Activated CD4-positive, alpha-beta memory T cell treated with anti-CD3 and anti-CD28 coated beads, Interleukin-2, amount 10 ng/mL, durations not matched to agents 7 days and 5 days (primary cell): ENCODE measurements at regions of chr3 and their contacts with region 1.

Region 1: DNA sequence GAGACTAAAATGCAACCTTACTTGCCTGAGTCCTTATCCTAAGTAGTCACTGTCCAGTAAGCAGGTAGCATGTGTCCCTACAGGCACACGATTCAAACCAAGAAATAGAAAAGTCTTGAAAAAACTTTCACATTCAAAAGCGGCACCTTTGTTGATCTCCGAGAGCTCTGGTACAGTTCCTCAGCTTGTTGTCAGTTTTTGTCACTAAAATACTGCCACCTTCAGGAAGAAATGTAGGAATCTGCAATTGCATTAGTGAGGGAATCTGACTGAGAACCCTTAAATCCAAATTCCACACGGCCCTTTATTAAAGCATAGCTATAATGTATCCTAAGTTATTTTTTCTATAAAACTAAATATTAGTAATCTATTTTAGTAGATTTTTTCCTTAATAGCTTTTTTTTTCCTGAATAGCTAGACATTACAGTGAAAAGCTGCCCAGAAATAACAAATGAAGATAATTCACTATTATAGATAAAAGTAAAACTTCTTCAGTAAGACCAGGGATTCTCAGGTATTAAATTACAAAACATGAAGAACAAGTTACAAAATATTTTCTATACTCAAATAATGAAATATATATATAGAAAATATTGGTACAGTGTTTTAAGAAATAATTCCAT is 44.0 kb downstream of the CCDC54 start:
- DNase-seq: no peak
- H3K4me3 Mint-ChIP-seq: no peak overlapping the region
- H3K27ac Mint-ChIP-seq: no peak overlapping the region
- H3K4me1 Mint-ChIP-seq: peaks cover 3% of the 10 kb centered on the region
- H3K27me3 Mint-ChIP-seq: peaks cover 21% of the 10 kb centered on the region

Region 2: DNA sequence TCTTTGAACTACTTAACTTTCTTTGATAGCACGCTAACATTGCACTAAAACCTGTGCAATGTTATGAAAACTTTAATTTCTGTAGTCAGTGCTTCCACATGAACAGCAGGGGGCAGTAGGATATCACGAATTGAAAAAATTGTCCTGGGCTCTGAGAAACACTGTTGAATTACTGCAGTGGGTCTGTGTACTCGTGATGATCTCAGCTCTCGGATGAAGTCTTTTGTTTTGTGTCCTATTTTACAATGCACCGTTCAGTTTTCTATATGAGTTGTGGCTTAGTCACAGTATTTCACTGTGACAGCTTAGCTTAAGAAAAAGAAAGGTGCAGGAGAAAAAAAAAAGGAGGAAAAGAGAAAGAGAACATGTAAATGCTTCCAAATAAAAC is 185.4 kb before region 1 on chr3:
- CTCF ChIA-PET with region 1: interaction called, 41 read pairs
- POLR2A ChIA-PET with region 1: interaction called, 3 read pairs
- DNase-seq: peak; percentile 47
- H3K4me3 Mint-ChIP-seq: peak overlapping the region; percentile 40
- H3K27ac Mint-ChIP-seq: no peak overlapping the region
- H3K4me1 Mint-ChIP-seq: peaks cover 16% of the 10 kb centered on the region
- H3K27me3 Mint-ChIP-seq: peaks cover 10% of the 10 kb centered on the region

Region 3: DNA sequence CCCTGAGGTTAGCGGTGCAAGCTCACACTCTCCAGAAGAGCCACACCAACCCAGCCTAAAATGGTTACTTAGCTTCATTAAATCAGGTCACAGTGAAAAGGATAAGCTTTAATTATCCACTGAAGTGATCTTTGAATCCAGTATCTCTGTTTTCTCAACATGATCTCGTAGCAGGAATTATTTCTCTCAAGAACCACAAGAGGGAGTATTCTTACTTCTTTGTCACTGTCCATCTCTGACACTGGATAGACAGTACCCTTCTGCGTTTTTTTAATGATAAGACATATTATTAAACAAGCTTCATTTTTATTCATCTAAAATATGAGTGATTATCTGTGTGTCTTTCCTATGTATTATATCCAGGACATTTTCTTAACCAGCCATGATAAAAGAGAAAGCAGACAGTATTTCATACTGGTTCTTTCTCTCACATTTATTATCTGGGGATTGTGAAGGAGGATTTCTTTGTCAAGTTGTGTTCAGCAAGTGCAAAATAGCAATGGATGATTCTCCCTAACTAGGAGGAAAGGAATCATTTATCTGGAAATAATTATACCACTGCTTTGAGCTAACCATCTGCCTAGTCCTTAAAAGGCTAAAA is 149.4 kb before region 1 on chr3:
- CTCF ChIA-PET with region 1: interaction called, 34 read pairs
- POLR2A ChIA-PET with region 1: no interaction called
- DNase-seq: no peak
- H3K4me3 Mint-ChIP-seq: no peak overlapping the region
- H3K27ac Mint-ChIP-seq: no peak overlapping the region
- H3K4me1 Mint-ChIP-seq: no peaks in the 10 kb centered on the region
- H3K27me3 Mint-ChIP-seq: peaks cover 17% of the 10 kb centered on the region

Region 4: GRCh38 chr3:107392549-107393165 is 28.6 kb before region 1 on chr3:
- CTCF ChIA-PET with region 1: no interaction called
- POLR2A ChIA-PET with region 1: no interaction called
- DNase-seq: no peak
- H3K4me3 Mint-ChIP-seq: no peak overlapping the region
- H3K27ac Mint-ChIP-seq: no peak overlapping the region
- H3K4me1 Mint-ChIP-seq: no peaks in the 10 kb centered on the region
- H3K27me3 Mint-ChIP-seq: peaks cover 10% of the 10 kb centered on the region

Region 5: DNA sequence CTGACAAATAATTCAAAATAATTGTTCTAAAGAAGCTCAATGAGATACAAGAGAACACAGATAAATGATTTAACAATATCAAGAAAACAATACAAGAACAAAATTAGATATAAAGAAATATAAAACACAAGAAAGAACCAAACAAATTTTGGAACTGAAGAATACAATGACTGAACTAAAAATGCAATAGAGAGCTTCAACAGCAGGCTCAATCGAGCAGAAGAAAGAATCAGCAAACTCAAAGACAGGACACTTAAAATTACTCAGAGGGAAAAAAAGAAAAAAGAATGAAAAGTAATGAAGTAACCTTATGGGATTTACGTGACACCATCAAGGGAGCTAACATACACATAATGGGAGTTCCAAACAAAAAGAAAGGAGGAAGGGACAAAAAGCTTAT is 11.9 kb before region 1 on chr3:
- CTCF ChIA-PET with region 1: interaction called, 11 read pairs
- POLR2A ChIA-PET with region 1: no interaction called
- DNase-seq: no peak
- H3K4me3 Mint-ChIP-seq: no peak overlapping the region
- H3K27ac Mint-ChIP-seq: no peak overlapping the region
- H3K4me1 Mint-ChIP-seq: peaks cover 6% of the 10 kb centered on the region
- H3K27me3 Mint-ChIP-seq: peaks cover 9% of the 10 kb centered on the region